Posterior vena cava (tissue), 2 donors: ENCODE measurements at regions of chr9 and their contacts with region 1.

Region 1: DNA sequence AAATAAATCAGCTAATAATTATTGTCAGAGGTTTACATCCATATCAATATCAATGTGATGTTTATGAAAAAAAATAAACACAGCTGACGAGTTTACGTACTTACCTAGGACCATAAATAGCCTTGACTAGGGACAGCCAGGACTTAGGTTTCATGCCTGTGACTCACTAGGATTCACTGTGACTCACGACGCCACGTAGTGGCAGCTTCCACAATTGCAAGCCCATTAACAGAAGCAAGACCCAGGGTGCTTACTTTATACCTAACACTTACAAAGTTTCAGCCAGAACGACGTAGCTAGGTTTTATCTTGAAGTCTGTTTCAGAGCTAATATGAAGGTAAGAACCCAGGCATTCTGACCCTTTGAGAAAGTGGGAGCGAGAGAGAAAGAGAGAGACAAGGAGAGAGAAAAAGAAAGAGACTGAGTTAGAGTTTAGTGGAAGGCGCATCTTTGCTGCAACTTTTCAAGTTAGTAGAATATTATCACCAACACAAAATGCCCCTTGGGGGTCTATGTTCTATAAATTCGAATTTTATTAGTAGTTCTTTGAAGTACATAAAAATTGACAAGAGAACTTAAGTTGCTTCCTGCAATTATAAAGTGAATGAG is 191.2 kb downstream of the GNA14 start:
- DNase-seq: peak; percentile 94

Region 2: DNA sequence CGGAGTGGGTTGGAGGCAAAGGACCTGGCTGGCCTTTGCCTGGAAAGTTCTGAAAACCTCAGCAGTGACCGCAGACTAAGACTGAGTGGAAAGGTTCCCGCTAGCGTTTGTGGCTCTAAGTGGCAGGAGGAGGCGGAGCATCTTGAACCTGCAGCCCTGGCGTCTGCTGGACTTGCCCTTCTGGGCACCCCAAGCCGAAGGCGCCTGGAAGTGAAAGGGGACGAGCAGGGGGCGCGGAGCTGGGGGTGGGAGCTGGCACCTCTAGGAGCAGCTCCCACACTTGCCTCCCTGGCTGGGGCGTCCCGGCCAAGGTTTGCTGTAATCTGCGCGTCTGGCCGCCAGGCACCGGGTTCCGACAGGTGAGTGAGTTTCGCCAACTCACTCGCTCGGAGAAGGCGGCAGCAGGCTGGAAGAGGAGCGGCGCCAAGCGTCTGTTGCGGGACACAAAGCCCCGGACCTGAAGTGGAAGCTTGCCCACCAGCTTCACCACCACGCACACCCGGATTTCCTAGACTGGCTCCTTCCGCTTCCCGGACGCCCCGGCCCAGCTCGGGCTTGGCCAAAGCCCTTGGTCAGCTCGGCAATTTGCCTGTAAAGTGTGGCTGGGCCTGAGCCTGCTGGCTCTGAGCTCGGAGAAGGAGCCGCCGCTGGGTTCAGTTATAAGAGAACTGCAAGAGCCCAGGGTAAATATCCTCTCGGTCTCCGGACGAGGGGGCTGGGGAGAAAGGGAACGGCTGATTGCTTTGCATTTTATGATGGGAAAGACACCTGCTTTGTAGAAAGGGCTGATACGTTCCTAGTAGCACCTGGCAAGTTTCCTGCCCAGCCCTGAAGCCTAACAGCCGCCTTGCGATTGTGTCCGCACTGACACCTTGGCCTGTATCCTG is 191.5 kb after region 1 on chr9 and contains the start of gene GNA14:
- intact Hi-C with region 1: loop called in 1 of 2 experiments (anchors 10 kb)
- DNase-seq: peak; percentile 88
- total RNA-seq, gene GNA14: 5.2 to 6.0 TPM

Region 3: GRCh38 chr9:78035383-78035993 is 578.6 kb after region 1 on chr9:
- intact Hi-C with region 1: loop called in 1 of 2 experiments (anchors 10 kb)
- DNase-seq: no peak